Caco-2 (cell line): ENCODE measurements at regions of chr1 and their contacts with region 1.

Region 1: DNA sequence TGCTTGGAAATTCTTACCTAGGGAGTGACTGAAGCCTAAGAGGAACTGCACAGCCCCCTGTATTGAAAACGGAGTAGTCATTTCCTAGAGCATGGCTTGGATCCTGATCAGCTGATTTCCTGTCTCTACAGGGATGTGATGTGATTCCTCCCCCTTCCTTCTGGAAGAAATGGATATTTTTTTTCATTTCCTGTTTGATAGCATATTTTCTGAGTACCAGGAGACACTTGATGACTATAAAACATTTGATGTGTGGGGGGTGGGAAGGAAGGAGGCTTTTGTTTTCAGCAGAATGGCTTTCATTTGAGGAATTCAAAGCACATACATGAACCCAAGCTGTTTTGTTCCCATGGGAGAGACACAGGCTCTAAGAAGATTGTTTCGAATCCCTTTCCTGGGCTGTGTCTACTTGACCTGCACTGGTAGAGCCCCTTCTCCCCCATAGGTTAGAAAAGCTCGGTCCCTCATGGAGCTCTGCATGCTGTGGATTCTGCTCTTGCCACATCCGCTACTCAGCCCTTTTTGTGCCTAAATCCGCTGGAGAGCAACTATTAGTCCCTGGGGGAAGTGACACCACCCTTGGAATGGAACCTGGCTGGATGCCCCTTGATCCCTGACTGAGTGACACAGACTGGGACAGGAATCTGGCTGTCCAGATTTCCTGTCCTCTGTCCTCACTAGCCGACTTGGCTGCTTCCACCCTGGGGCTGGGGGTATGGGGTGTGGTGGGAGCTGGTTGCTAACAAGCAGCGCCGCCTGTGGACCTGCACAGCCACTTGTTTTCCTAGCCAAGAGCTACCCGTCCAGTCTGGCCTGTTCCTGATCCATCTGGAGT is 71.8 kb upstream of the MACF1 start:
- DNase-seq: peak; percentile 88 to 93
- H3K4me3 ChIP-seq: no peak overlapping the region
- H3K4me3 Mint-ChIP-seq: peak overlapping the region; percentile 50
- H3K27ac Mint-ChIP-seq: peak overlapping the region; percentile 77
- H3K4me1 ChIP-seq: peaks cover 22% of the 10 kb centered on the region
- H3K4me1 Mint-ChIP-seq: peaks cover 18% of the 10 kb centered on the region
- H3K27me3 ChIP-seq: no peaks in the 10 kb centered on the region
- H3K27me3 Mint-ChIP-seq: no peaks in the 10 kb centered on the region
- CTCF ChIP-seq: peak in 1 of 2 experiments; percentile 52

Region 2: DNA sequence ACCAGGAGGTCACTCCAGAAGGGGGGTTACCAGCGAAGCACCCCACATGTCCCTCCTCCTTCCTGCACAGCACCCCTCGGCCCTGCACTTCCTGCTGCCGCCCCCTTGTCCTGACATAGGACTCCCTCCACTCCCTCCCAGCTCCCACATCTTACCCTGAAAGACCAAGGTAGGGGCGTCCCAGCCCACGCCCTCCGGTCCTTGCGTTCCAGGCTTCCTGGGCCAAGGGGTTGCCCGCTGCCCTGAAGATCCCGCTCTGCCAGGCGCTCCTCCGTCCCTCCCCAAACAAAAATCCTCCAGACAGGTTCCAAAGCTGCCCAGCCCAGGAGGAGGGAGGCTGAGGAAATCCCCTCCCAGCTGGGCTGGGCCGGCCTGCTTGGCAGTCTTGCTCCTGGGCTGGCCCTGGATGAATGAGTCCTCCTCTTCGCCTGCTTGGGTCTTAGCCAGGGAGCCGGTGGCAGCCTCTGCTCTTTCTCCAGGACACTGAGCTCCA is 191.1 kb before region 1 on chr1 and contains the start of gene RHBDL2:
- CTCF ChIA-PET with region 1: no interaction called
- POLR2A ChIA-PET with region 1: no interaction called
- intact Hi-C with region 1: no loop called
- DNase-seq: no peak
- H3K4me3 ChIP-seq: no peak within 1 kb of the TSS
- H3K4me3 Mint-ChIP-seq: no peak within 1 kb of the TSS
- H3K27ac Mint-ChIP-seq: no peak within 1 kb of the TSS
- H3K4me1 ChIP-seq: no peaks in the 10 kb centered on the region
- H3K4me1 Mint-ChIP-seq: no peaks in the 10 kb centered on the region
- H3K27me3 ChIP-seq: no peaks in the 10 kb centered on the region
- H3K27me3 Mint-ChIP-seq: no peaks in the 10 kb centered on the region
- CTCF ChIP-seq: no peak
- total RNA-seq, gene RHBDL2: not detected in 2 replicates

Region 3: DNA sequence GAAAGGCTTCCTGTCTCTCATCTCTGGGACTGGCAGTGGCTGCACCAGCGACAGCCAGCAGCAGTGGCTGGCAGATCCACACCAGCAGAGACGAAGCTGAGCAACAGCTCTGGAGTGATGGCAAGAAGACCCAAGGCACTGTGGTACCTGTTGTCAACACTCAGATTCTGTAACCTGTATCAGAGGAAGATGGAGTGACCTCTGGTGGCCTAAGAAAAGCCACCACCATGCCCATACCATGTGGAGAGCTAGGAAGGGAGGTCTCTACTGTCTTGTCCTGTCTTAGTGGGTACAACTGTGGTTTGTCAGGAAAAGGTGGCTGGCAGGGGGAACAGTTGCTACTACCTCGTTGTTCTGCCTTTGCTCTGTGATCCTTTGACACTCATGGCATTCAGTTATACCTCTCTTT is 168.6 kb before region 1 on chr1:
- CTCF ChIA-PET with region 1: no interaction called
- POLR2A ChIA-PET with region 1: no interaction called
- intact Hi-C with region 1: no loop called
- DNase-seq: peak in 1 of 2 experiments; percentile 10
- H3K4me3 ChIP-seq: no peak overlapping the region
- H3K4me3 Mint-ChIP-seq: no peak overlapping the region
- H3K27ac Mint-ChIP-seq: no peak overlapping the region
- H3K4me1 ChIP-seq: peaks cover 11% of the 10 kb centered on the region
- H3K4me1 Mint-ChIP-seq: peaks cover 18% of the 10 kb centered on the region
- H3K27me3 ChIP-seq: no peaks in the 10 kb centered on the region
- H3K27me3 Mint-ChIP-seq: no peaks in the 10 kb centered on the region
- CTCF ChIP-seq: peak in 1 of 2 experiments; percentile 17

Region 4: DNA sequence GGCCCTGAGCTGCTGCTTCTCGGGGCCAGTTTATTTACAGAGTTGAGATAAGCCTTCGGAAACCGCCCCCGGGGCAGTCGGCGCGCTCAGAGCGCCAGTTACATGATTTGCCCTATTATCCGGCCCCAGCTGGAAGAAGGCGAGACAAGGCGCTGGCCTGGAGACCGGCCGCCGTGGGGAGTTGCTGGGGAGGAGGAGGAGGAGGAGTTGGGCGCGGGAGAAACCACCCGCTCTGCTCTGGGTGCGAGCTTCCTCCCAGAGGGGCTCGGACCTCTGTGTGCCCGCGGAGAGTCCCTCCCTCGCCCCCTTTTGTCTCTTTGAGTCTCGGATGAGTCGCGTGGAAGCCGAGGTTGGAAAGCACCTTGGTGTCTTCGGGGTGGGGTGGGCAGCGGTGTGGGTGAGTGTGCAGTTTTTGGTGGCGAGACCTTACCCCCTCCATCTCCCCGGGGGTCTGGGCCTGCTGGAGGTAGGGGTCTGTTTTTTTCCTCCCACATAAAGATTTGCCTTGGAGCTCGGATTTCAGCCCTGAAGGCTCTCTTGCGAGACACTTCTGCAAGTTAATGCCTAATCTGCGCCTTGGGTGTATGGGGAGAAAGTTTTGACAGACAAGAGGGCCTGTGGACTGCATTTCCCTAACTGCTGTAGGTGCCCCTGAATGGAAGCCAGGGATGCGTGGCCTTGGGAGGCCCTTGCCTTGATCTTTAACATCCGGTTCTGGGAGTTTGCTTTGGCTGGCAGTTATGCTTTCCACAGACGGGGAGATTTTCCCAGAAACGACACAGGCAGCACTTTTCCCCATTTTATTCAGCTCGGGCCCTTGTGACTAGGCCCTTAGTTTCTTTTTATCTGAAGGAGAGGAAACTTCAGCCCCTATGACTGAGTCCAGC is 26.6 kb before region 1 on chr1:
- CTCF ChIA-PET with region 1: interaction called, 3 read pairs
- POLR2A ChIA-PET with region 1: interaction called, 3 read pairs
- intact Hi-C with region 1: loop called (anchors 1 kb)
- DNase-seq: peak in 1 of 2 experiments; percentile 23
- H3K4me3 ChIP-seq: peak overlapping the region; percentile 72
- H3K4me3 Mint-ChIP-seq: no peak overlapping the region
- H3K27ac Mint-ChIP-seq: peak overlapping the region; percentile 81
- H3K4me1 ChIP-seq: peaks cover 18% of the 10 kb centered on the region; the same call in 1 of the 2 replicates
- H3K4me1 Mint-ChIP-seq: peaks cover 14% of the 10 kb centered on the region
- H3K27me3 ChIP-seq: no peaks in the 10 kb centered on the region
- H3K27me3 Mint-ChIP-seq: no peaks in the 10 kb centered on the region
- CTCF ChIP-seq: no peak

Region 5: DNA sequence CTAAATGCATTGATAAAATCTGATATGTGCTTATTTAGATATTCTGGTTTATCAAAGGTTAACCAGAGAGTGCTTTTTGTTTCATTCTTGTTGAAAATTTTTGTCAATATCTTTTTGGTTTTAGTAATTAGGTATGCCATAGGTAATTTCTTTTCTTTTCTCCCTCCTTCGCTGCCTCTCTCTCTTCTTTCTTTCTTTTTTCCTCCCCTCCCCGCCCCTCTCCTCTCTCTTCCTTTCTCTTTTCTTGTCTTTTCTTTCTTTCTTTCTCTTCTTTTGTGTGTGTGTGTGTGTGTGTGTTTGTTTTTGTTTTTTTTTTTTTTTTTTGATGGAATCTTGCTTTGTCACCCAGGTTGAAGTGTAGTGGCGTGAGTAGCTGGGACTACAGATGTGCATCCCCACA is 57.4 kb after region 1 on chr1:
- CTCF ChIA-PET with region 1: interaction called, 27 read pairs
- POLR2A ChIA-PET with region 1: no interaction called
- intact Hi-C with region 1: loop called (anchors 1 kb)
- DNase-seq: no peak
- H3K4me3 ChIP-seq: no peak overlapping the region
- H3K4me3 Mint-ChIP-seq: no peak overlapping the region
- H3K27ac Mint-ChIP-seq: peak overlapping the region; percentile 88
- H3K4me1 ChIP-seq: peaks cover 22% of the 10 kb centered on the region
- H3K4me1 Mint-ChIP-seq: peaks cover 32% of the 10 kb centered on the region
- H3K27me3 ChIP-seq: no peaks in the 10 kb centered on the region
- H3K27me3 Mint-ChIP-seq: no peaks in the 10 kb centered on the region
- CTCF ChIP-seq: no peak

Region 6: GRCh38 chr1:39258146-39258924 is 125.6 kb after region 1 on chr1:
- CTCF ChIA-PET with region 1: no interaction called
- POLR2A ChIA-PET with region 1: no interaction called
- intact Hi-C with region 1: loop called (anchors 1 kb)
- DNase-seq: peak; percentile 55 to 70
- H3K4me3 ChIP-seq: no peak overlapping the region
- H3K4me3 Mint-ChIP-seq: no peak overlapping the region
- H3K27ac Mint-ChIP-seq: no peak overlapping the region
- H3K4me1 ChIP-seq: no peaks in the 10 kb centered on the region
- H3K4me1 Mint-ChIP-seq: no peaks in the 10 kb centered on the region
- H3K27me3 ChIP-seq: no peaks in the 10 kb centered on the region
- H3K27me3 Mint-ChIP-seq: no peaks in the 10 kb centered on the region
- CTCF ChIP-seq: peak; percentile 62 to 75